ENCODE measurements at regions of chr6 and their contacts with region 1.

Region 1: GRCh38 chr6:26342106-26343004 is 22.6 kb upstream of the BTN3A2 start:
- DNase-seq: peak in 1 of 2 donors; percentile 30
- ATAC-seq: peak; percentile 46 to 55 (median 54)
- H3K4me3 ChIP-seq: peak overlapping the region; percentile 26
- H3K4me3 Mint-ChIP-seq: peak overlapping the region; percentile 94
- H3K27ac ChIP-seq: no peak overlapping the region
- H3K27ac Mint-ChIP-seq: peak overlapping the region in 1 of 2 donors; percentile 89
- H3K4me1 ChIP-seq: peaks cover 7% of the 10 kb centered on the region
- H3K4me1 Mint-ChIP-seq: peaks cover 7 to 16% of the 10 kb centered on the region in 2 donors
- H3K27me3 ChIP-seq: peaks cover 2% of the 10 kb centered on the region
- H3K27me3 Mint-ChIP-seq: peaks cover 3 to 17% of the 10 kb centered on the region in 2 donors
- CTCF ChIP-seq: no peak

Region 2: DNA sequence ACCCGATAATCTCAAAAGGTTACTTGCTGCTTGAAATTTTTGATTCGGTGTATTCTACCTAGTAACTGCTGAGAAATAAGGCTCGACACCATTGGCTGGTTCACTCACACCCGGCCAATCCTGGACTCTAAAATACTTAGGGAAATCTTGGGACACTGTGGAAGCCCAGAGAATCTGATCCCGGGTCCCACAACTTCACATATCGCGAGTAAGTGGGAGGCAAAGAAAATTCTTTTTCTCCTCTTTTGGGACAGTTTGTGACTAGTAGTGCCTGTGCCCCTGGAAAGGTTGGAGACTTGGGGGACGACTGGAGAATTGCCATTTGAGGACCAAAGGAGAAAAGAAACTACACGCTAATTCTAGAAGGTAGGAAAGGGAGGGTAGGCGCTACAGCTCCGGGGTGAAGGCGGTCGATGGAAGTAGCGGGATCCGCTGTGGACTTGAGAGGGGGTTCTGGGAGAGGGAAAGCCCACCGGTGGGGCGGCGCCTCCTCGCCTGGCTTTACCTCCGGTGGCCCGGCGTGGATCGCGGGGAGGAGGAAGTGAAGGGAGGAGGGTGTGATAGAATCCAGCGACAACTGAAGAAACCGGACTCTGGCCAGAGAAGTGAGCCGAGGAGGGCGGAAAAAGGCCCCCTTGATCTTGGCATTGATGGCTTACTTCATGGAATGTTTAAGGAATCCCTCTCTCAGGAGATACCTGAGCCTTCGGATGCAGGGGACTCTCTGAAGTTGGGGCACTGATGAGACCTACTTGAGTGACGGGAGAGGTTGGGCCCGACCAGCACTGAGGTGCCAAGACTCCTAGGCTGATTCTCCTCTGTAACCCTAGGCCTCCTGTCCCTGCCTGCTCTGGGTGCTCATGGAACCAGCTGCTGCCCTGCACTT is 79.1 kb after region 1 on chr6:
- intact Hi-C with region 1: loop called (anchors 2 kb)
- DNase-seq: peak; percentile 33 to 84
- ATAC-seq: peak; percentile 93 to 97 (median 95)
- H3K4me3 ChIP-seq: peak overlapping the region; percentile 83
- H3K4me3 Mint-ChIP-seq: no peak overlapping the region
- H3K27ac ChIP-seq: peak overlapping the region; percentile 64
- H3K27ac Mint-ChIP-seq: no peak overlapping the region
- H3K4me1 ChIP-seq: peaks cover 12% of the 10 kb centered on the region
- H3K4me1 Mint-ChIP-seq: peaks cover 0 to 7% of the 10 kb centered on the region in 2 donors
- H3K27me3 ChIP-seq: no peaks in the 10 kb centered on the region
- H3K27me3 Mint-ChIP-seq: no peaks in the 10 kb centered on the region
- CTCF ChIP-seq: no peak

Region 3: DNA sequence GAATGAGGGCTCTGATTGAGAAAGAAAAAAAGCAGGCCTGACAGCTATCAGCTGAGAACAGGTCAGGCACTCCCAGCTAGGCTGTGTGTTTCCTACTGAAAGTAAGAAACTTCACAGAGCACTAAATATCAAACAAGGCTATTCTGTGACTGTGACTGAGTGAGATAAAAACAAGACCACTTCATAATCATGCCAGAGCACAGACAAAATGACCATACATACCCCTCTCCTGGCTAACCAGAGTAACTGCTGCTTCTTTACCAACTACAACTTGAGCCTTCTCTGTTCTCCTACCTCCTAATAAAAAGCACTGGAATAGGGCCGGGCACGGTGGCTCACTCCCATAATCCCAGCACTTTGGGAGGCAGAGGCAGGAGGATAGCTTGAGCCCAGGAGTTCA is 150.9 kb after region 1 on chr6:
- intact Hi-C with region 1: loop called (anchors 5 kb)
- DNase-seq: peak in 1 of 2 donors; percentile 42
- ATAC-seq: peak in 2 of 3 donors; percentile 57 to 61
- H3K4me3 ChIP-seq: no peak overlapping the region
- H3K4me3 Mint-ChIP-seq: no peak overlapping the region
- H3K27ac ChIP-seq: no peak overlapping the region
- H3K27ac Mint-ChIP-seq: no peak overlapping the region
- H3K4me1 ChIP-seq: no peaks in the 10 kb centered on the region
- H3K4me1 Mint-ChIP-seq: no peaks in the 10 kb centered on the region
- H3K27me3 ChIP-seq: no peaks in the 10 kb centered on the region
- H3K27me3 Mint-ChIP-seq: peaks cover 9 to 11% of the 10 kb centered on the region in 2 donors
- CTCF ChIP-seq: no peak

Region 4: GRCh38 chr6:26596579-26597388 is 254.4 kb after region 1 on chr6 and contains the start of gene ABT1:
- intact Hi-C with region 1: loop called (anchors 1 kb)
- DNase-seq: peak; percentile 96 to 98
- ATAC-seq: peak; percentile 88 to 96 (median 90)
- H3K4me3 ChIP-seq: peak within 1 kb of the TSS; percentile 79
- H3K4me3 Mint-ChIP-seq: no peak within 1 kb of the TSS
- H3K27ac ChIP-seq: peak within 1 kb of the TSS; percentile 92
- H3K27ac Mint-ChIP-seq: no peak within 1 kb of the TSS
- H3K4me1 ChIP-seq: peaks cover 18% of the 10 kb centered on the region
- H3K4me1 Mint-ChIP-seq: peaks cover 6 to 10% of the 10 kb centered on the region in 2 donors
- H3K27me3 ChIP-seq: peaks cover 20% of the 10 kb centered on the region
- H3K27me3 Mint-ChIP-seq: peaks cover 0 to 15% of the 10 kb centered on the region in 2 donors
- CTCF ChIP-seq: no peak
- total RNA-seq, gene ABT1: 23.9 to 30.7 (median 29.9) TPM

Region 5: GRCh38 chr6:27078734-27079357 is 736.5 kb after region 1 on chr6:
- intact Hi-C with region 1: loop called (anchors 5 kb)
- DNase-seq: peak in 1 of 2 donors; percentile 70
- ATAC-seq: peak in 2 of 3 donors; percentile 55 to 68
- H3K4me3 ChIP-seq: no peak overlapping the region
- H3K4me3 Mint-ChIP-seq: no peak overlapping the region
- H3K27ac ChIP-seq: no peak overlapping the region
- H3K27ac Mint-ChIP-seq: no peak overlapping the region
- H3K4me1 ChIP-seq: peaks cover 3% of the 10 kb centered on the region
- H3K4me1 Mint-ChIP-seq: peaks cover 6 to 7% of the 10 kb centered on the region in 2 donors
- H3K27me3 ChIP-seq: peaks cover 6% of the 10 kb centered on the region
- H3K27me3 Mint-ChIP-seq: peaks cover 54 to 71% of the 10 kb centered on the region in 2 donors
- CTCF ChIP-seq: peak; percentile 52

Measured in natural killer cell (primary cell).